H1 (cell line): ENCODE measurements at regions of chr1 and their contacts with region 1.

Region 1: GRCh38 chr1:201114236-201115131 is 2.3 kb upstream of the CACNA1S start:
- DNase-seq: peak; percentile 90 to 91
- H3K4me3 ChIP-seq: peak overlapping the region; percentile 30 to 72 (median 50)
- H3K27ac ChIP-seq: no peak overlapping the region
- H3K4me1 ChIP-seq: peaks cover 0 to 5% (median under 1%) of the 10 kb centered on the region in 4 experiments; a peak in 1 of 7 replicates
- H3K27me3 ChIP-seq: peaks cover 9 to 27% (median 21%) of the 10 kb centered on the region in 4 experiments
- CTCF ChIP-seq: peak; percentile 86 to 96 (median 95)
- EP300 ChIP-seq: no peak
- POLR2A ChIP-seq: peak in 1 of 2 experiments; percentile 77; a peak in 2 of 3 replicates
- RAD21 ChIP-seq: peak; percentile 95 to 99

Region 2: DNA sequence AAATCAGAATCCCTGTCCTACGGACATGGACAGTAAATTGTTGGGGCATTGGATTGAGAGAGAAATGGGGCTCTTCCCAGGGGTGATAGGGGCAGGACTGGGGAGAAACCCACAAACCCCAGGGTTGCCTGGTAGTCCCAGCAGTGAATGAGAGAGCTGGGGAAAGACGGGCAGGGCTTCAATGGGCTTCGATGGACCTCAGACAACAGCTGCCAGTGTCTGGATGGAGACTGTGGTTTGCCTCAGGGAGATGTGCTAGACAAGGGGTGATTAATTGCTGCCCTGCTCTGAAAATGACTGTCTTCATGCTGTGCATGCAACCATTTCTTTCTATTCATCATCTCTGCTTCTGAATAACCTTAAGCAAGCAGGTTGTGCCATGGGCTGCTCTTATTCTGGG is 234.3 kb before region 1 on chr1:
- CTCF ChIA-PET with region 1: no interaction called
- POLR2A ChIA-PET with region 1: no interaction called
- DNase-seq: peak in 1 of 2 experiments; percentile 37
- H3K4me3 ChIP-seq: no peak overlapping the region
- H3K27ac ChIP-seq: no peak overlapping the region
- H3K4me1 ChIP-seq: peaks cover 0 to 6% (median 5%) of the 10 kb centered on the region in 4 experiments; a peak in 4 of 7 replicates
- H3K27me3 ChIP-seq: no peaks in the 10 kb centered on the region
- CTCF ChIP-seq: no peak
- EP300 ChIP-seq: no peak
- POLR2A ChIP-seq: no peak
- RAD21 ChIP-seq: no peak

Region 3: GRCh38 chr1:201072158-201072557 is 42.3 kb before region 1 on chr1:
- CTCF ChIA-PET with region 1: interaction called, 10 read pairs
- POLR2A ChIA-PET with region 1: no interaction called
- DNase-seq: no peak
- H3K4me3 ChIP-seq: no peak overlapping the region
- H3K27ac ChIP-seq: no peak overlapping the region
- H3K4me1 ChIP-seq: peaks cover 0 to 4% (median 0%) of the 10 kb centered on the region in 4 experiments; a peak in 1 of 7 replicates
- H3K27me3 ChIP-seq: no peaks in the 10 kb centered on the region; a peak in 1 of 7 replicates
- CTCF ChIP-seq: no peak
- EP300 ChIP-seq: no peak
- POLR2A ChIP-seq: no peak
- RAD21 ChIP-seq: no peak

Region 4: GRCh38 chr1:201096035-201096434 is 18.4 kb before region 1 on chr1:
- CTCF ChIA-PET with region 1: interaction called, 39 read pairs
- POLR2A ChIA-PET with region 1: no interaction called
- DNase-seq: no peak
- H3K4me3 ChIP-seq: no peak overlapping the region
- H3K27ac ChIP-seq: no peak overlapping the region
- H3K4me1 ChIP-seq: peaks cover 0 to 3% (median 0%) of the 10 kb centered on the region in 4 experiments; a peak in 1 of 7 replicates
- H3K27me3 ChIP-seq: 0 out of 7 replicates have a peak, but pooled peaks cover 0 to 1% (median 0%) of the 10 kb centered on the region in 4 experiments
- CTCF ChIP-seq: no peak
- EP300 ChIP-seq: no peak
- POLR2A ChIP-seq: no peak
- RAD21 ChIP-seq: no peak